Dendritic cell treated with granulocyte-macrophage colony-stimulating factor and Interleukin-4, amounts not matched to agents 40 ng/mL and 50 ng/mL, for 4 days (primary cell): ENCODE measurements at regions of chr16 and their contacts with region 1.

Region 1: GRCh38 chr16:82169861-82170845 is at the start of gene MPHOSPH6:
- H3K4me3 Mint-ChIP-seq: peak within 1 kb of the TSS; percentile 91
- H3K27ac Mint-ChIP-seq: peak within 1 kb of the TSS; percentile 91
- H3K4me1 Mint-ChIP-seq: peaks cover 34% of the 10 kb centered on the region
- H3K27me3 Mint-ChIP-seq: peaks cover 21% of the 10 kb centered on the region

Region 2: GRCh38 chr16:81928975-81929374 is 241.2 kb before region 1 on chr16:
- intact Hi-C with region 1: no loop called
- H3K4me3 Mint-ChIP-seq: no peak overlapping the region
- H3K27ac Mint-ChIP-seq: peak overlapping the region; percentile 35
- H3K4me1 Mint-ChIP-seq: peaks cover 18% of the 10 kb centered on the region
- H3K27me3 Mint-ChIP-seq: no peaks in the 10 kb centered on the region

Region 3: GRCh38 chr16:82190386-82190785 is 20.2 kb after region 1 on chr16:
- intact Hi-C with region 1: loop called (anchors 2 kb)
- H3K4me3 Mint-ChIP-seq: no peak overlapping the region
- H3K27ac Mint-ChIP-seq: peak overlapping the region; percentile 79
- H3K4me1 Mint-ChIP-seq: peaks cover 44% of the 10 kb centered on the region
- H3K27me3 Mint-ChIP-seq: no peaks in the 10 kb centered on the region

Region 4: DNA sequence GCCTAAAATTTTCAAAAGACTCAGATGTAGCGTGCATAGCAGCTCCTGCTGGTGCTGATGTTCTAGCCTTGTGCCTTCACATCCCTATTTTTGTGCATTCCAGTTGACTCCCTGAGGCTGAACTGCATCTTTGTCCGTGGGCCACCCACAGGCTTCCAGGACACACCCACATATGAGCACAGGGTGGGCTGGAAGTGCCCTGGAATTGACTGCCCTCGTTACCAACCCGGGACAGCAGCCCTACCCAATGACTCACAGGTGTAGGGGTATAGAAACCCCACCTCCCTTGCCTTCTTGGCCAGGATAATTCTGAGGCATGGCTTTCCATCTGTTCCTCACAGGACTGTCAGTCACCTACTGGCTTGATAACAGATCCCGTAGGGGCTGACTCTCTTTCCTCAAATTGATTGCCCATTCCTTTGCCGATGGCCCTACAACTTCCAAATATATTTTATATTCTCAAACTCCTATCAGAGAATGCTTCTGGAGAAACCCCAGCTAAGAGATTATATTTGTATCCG is 390.7 kb after region 1 on chr16:
- intact Hi-C with region 1: no loop called
- H3K4me3 Mint-ChIP-seq: no peak overlapping the region
- H3K27ac Mint-ChIP-seq: no peak overlapping the region
- H3K4me1 Mint-ChIP-seq: no peaks in the 10 kb centered on the region
- H3K27me3 Mint-ChIP-seq: no peaks in the 10 kb centered on the region